Lower leg skin (tissue), 4 donors: ENCODE measurements at regions of chr1 and their contacts with region 1.

Region 1: DNA sequence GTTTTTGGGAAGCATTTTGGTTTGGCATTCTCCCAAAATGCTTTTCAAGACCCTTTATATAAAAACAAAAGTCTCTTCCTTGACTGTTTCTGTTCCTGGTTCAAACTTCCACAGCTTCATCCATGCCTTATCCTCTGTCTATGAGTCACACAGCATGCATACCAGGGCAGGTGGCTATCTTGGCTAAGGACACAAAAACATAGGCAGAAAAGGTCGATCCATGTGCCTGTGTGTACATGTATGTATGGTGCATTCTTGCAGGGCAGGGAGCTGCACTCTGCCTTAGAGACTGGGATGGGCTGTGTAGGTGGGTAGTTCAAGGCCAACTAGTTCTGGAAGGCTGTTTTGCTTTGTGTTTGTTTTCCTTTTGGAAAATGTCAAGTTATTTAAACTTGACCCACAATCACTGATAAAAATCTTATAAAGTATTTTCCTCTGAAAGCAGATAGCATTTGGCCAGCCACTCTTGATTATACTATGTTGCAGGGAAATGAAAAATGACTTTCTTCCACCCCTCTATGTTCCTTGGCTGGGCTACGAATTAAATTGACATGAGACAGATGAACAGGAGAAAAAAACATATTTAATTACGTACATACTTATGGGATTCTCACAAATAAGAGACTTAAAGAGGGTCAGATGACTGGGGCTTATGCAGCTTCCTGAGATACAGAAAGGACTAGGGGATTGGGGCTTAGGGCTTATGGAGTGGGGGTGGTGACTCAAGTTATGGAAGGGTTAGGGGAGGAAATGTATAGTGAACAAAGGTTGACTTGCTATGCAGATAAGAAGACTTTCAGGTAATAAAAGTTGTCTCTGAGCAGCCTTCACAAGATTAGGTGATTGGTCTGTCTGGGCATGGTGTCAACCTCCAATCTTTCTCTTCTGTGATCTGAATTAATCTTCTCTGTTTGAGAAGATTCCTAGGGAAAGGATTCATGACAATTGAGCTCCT is 436.8 kb downstream of the SIPA1L2 start:
- DNase-seq: no peak
- H3K4me3 ChIP-seq: no peak overlapping the region
- CTCF ChIP-seq: no peak
- POLR2A ChIP-seq: no peak

Region 2: GRCh38 chr1:232477728-232478127 is 284.6 kb after region 1 on chr1:
- intact Hi-C with region 1: no loop called
- DNase-seq: peak in 1 of 2 donors; percentile 48
- H3K4me3 ChIP-seq: no peak overlapping the region
- CTCF ChIP-seq: no peak
- POLR2A ChIP-seq: no peak

Region 3: GRCh38 chr1:232786845-232787455 is 593.8 kb after region 1 on chr1:
- intact Hi-C with region 1: loop called (anchors 5 kb)
- DNase-seq: no peak
- H3K4me3 ChIP-seq: no peak overlapping the region
- CTCF ChIP-seq: no peak
- POLR2A ChIP-seq: no peak